ENCODE measurements at regions of chr3 and their contacts with region 1.

Region 1: GRCh38 chr3:61858056-61858455 is 296.7 kb downstream of the PTPRG start:
- H3K4me3 ChIP-seq: no peak overlapping the region
- H3K27ac ChIP-seq: no peak overlapping the region
- H3K4me1 ChIP-seq: no peaks in the 10 kb centered on the region
- CTCF ChIP-seq: peak; percentile 37; the same call in 1 of the 2 replicates

Region 2: DNA sequence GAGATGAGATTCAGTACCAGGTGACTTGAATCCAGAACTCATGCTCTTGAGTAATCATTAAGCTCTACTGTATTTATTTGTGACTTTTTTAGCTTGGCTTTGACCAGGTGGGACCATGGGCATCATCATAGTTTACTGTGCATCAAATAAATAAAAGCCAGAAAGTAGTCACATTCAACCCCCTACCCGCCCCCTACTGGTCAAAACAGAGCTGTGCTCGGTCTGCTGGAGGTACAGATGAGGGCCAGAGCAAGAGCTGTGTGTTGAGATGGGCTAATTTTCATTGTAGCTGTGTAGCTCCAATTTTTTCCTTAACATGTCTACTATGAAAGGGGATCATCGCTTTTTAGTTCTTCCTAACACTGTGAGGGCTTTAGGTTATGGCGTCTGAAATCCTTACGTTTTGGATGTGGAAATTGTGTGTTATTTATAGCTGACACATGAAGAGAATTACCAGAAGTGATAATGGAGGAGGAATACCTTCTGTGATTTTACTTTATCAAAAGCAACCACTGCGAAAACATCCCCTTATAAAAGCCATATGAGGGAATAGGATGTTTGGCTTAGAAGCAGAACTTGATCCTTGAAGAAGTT is 78.4 kb after region 1 on chr3:
- CTCF ChIA-PET with region 1: interaction called, 10 read pairs
- POLR2A ChIA-PET with region 1: no interaction called
- H3K4me3 ChIP-seq: no peak overlapping the region
- H3K27ac ChIP-seq: no peak overlapping the region
- H3K4me1 ChIP-seq: peaks cover 10% of the 10 kb centered on the region; the same call in 1 of the 2 replicates
- CTCF ChIP-seq: no peak

Region 3: GRCh38 chr3:62188681-62189383 is 330.8 kb after region 1 on chr3:
- CTCF ChIA-PET with region 1: interaction called, 21 read pairs
- POLR2A ChIA-PET with region 1: no interaction called
- H3K4me3 ChIP-seq: no peak overlapping the region
- H3K27ac ChIP-seq: no peak overlapping the region
- H3K4me1 ChIP-seq: no peaks in the 10 kb centered on the region
- CTCF ChIP-seq: peak; percentile 77